ENCODE measurements at regions of chr15 and their contacts with region 1.

Region 1: DNA sequence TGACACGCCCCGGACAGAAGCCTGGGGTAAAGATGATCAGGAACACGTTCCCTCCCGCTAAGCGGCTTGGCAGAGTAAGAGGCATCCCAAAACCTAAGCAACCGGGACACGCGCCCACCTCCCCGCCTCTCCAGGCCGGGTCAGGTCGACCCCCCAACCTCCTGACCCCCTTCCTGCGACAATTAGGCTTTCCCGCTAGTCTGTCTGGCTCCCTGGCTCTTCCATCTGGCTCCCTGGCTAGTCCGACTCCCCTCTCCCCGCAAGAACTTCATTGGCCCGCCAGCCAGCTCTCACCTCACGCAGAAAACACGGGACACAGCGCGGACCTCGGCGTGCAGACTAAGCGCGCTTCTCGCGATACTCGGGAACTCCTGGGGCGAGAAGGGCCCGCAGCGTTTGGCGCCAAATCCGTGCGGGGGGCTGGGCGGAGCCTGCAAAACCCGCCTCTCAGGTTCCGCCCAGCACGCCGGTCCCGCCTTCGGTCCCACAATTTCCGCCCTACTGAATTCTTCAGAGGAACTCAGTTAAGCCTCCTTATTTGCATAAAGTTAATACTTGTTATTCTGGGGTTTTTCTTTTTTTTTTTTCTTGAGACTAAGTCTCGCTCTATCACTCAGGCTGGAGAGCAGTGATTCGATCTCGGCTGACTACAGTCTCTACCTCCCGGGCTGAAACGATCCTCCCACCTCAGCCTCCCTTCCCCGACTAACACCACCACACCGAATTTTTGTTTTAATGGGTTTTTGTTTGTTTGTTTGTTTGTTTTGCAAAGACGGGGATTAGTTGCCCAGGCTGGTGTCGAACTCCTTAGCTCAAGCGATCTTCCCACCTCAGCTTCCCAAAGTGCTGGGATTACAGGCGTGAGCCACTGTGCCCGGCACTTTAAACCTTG is at the start of gene TIPIN:
- DNase-seq: peak; percentile 92
- H3K4me3 ChIP-seq: peak within 1 kb of the TSS; percentile 62 to 82 (median 63)
- H3K27ac ChIP-seq: peak within 1 kb of the TSS; percentile 78
- H3K4me1 ChIP-seq: peaks cover 9% of the 10 kb centered on the region
- H3K27me3 ChIP-seq: no peaks in the 10 kb centered on the region
- CTCF ChIP-seq: no peak
- total RNA-seq, gene TIPIN: 7.7 to 18.1 TPM

Region 2: GRCh38 chr15:66459818-66460615 is 103.4 kb after region 1 on chr15:
- CTCF ChIA-PET with region 1: no interaction called
- dilution Hi-C with region 1: no loop called
- in situ Hi-C with region 1: no loop called
- intact Hi-C with region 1: loop called (anchors 1 kb)
- DNase-seq: peak; percentile 83
- H3K4me3 ChIP-seq: peak overlapping the region in 1 of 3 experiments; percentile 17
- H3K27ac ChIP-seq: peak overlapping the region; percentile 96
- H3K4me1 ChIP-seq: peaks cover 45% of the 10 kb centered on the region
- H3K27me3 ChIP-seq: no peaks in the 10 kb centered on the region
- CTCF ChIP-seq: no peak

Region 3: GRCh38 chr15:66483131-66483566 is 126.6 kb after region 1 on chr15:
- CTCF ChIA-PET with region 1: no interaction called
- dilution Hi-C with region 1: no loop called
- in situ Hi-C with region 1: loop called in 1 of 2 experiments (anchors 10 kb)
- intact Hi-C with region 1: loop called (anchors 5 kb)
- DNase-seq: peak; percentile 80
- H3K4me3 ChIP-seq: no peak overlapping the region
- H3K27ac ChIP-seq: no peak overlapping the region
- H3K4me1 ChIP-seq: peaks cover 33% of the 10 kb centered on the region
- H3K27me3 ChIP-seq: no peaks in the 10 kb centered on the region
- CTCF ChIP-seq: no peak